Posterior vena cava (tissue), 2 donors: ENCODE measurements at regions of chr4 and their contacts with region 1.

Region 1: DNA sequence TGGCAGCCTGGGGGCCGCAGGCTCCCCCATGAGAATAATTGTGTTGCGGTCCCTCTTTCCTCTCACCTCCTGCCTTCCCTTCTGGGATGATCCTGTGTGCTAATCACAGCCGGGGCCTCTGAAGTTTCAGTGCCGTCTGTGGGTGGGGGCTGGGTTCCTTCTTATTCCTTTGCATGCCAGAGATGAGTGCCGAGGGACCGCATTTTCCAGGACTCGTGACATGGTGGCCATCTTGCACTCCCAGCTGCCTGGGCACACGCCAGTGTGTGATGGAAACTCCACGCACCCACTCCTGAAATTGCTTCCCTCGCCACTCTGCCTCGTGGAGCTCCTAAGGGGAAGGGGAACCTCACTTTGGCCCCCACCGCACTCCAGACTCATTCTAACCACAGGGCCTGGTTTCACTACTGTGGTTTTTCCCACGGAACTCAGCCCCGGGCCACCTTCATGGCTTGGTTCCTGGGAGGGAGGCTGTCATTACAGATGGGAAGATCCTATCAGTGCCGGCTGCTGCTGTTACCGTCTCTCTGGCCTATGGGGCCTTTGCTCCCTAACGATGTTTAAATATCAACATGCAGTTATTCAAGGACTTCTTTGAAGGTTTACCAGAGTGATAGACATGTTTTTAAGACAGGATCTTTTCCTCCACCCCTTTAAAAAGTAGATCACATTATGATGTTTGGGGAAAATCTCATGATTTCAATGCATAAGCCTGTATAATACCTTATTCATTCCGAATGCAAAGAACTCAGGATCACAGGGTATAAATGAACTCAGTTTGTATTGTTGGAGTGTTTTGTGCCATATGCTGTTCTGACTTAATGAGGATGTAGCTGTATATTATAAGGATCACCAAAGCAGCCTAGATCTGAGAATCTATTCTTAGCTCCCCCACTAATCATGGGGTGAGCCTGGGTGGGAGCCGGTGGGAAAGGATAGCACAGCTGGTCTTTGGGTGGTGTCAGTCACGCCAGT is 89.6 kb downstream of the SORCS2 start:
- DNase-seq: no peak

Region 2: DNA sequence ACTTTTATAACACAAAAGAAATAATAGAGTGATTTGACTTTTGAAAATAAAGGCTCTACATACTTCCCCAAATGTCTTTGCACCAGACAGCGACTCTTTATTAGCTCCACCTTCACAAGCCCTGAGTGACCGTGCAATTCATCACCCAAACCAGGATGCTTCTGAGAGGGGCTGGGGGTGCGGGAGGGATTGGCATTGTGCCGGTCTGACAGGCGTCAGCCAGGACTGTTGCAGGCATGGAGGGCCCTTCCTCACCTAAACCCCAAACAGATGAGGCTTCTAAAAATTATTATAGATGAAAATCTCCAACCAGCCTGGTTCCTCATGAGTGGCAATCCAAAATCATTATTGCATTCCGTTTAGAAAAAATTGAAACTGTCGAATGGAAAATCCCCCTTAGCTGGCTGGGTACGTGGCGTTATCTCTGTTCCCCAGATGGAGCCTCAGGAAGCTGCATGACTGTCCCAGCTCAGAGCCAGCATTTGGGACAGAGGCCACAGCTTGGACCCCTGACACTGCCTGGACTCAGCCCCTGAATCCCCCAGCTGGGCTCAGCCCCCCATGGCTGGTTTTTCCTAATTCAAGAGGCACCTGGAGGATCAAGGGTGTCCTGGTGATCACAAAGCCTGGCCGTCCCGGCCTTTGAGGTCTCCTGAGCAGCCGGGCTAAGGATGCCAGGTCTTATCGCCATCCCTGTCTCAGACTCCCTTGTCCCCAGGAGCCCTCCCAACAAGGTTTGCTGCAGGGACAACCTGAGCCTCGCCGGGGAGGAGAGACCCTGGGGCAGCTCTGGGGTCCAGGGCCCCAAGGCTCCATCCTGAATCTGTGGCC is 29.3 kb before region 1 on chr4:
- intact Hi-C with region 1: no loop called
- DNase-seq: no peak

Region 3: DNA sequence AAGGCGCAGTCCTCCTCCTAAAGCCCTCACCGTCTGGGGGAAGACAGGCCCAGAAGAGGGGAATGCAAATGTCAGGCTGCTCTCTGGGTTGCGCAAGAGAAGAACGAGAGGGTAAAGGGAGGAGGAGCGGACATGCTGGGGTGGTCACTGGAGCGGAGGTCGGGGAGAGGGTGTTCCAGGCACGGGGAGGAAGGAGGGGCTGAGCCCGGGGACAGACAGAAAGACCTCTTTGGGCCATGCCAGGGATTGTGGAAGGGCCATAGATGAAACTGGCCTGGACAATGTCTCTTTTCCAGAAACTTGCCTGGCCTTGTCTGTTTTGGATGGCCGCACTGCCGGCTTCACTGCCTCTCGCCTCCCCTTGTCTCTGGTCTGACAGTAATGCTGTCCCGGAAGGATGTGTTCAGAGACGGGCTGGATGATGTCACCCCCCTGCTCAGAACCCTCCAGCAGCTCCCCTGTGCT is 31.4 kb after region 1 on chr4:
- intact Hi-C with region 1: loop called in 1 of 2 experiments (anchors 2 kb)
- DNase-seq: no peak

Region 4: GRCh38 chr4:7381221-7381889 is 99.4 kb after region 1 on chr4:
- intact Hi-C with region 1: no loop called
- DNase-seq: peak; percentile 80